GM23248 (cell line): ENCODE measurements at regions of chr6 and their contacts with region 1.

Region 1: GRCh38 chr6:84568971-84569370 is 195.4 kb downstream of the TBX18 start:
- DNase-seq: peak; percentile 53
- H3K4me3 ChIP-seq: no peak overlapping the region
- H3K27ac ChIP-seq: no peak overlapping the region
- H3K4me1 ChIP-seq: no peaks in the 10 kb centered on the region
- H3K27me3 ChIP-seq: no peaks in the 10 kb centered on the region

Region 2: DNA sequence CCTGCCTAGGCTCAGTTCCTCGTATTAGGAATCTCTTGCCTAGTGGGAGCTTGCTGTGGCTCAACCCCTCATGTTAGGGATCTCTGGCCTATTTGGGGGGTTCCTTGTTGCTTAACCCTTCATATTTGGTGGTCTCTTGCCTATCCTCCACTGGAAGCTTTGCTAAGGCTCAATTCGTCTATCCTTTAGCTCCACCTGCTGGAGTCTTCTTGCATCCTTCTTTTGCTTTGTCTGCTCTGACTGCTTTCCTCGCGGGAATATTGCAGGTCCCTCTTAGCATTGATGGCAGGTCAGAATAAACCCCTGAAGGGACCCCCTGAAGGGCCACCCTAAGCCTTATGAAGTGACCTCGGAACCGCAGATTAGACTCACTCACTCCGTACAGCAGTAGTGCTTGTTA is 398.4 kb after region 1 on chr6:
- in situ Hi-C with region 1: loop called (anchors 25 kb)
- DNase-seq: peak; percentile 70
- H3K4me3 ChIP-seq: no peak overlapping the region
- H3K27ac ChIP-seq: no peak overlapping the region
- H3K4me1 ChIP-seq: no peaks in the 10 kb centered on the region
- H3K27me3 ChIP-seq: no peaks in the 10 kb centered on the region

Region 3: GRCh38 chr6:85419046-85419759 is 850.2 kb after region 1 on chr6:
- in situ Hi-C with region 1: no loop called
- DNase-seq: peak; percentile 56
- H3K4me3 ChIP-seq: no peak overlapping the region
- H3K27ac ChIP-seq: peak overlapping the region; percentile 53
- H3K4me1 ChIP-seq: peaks cover 83% of the 10 kb centered on the region
- H3K27me3 ChIP-seq: no peaks in the 10 kb centered on the region